ENCODE measurements at regions of chr2 and their contacts with region 1.

Region 1: GRCh38 chr2:207625018-207625907 is at the start of gene METTL21A:
- DNase-seq: peak; percentile 73
- ATAC-seq: peak; percentile 51
- H3K4me3 Mint-ChIP-seq: peak within 1 kb of the TSS; percentile 90
- H3K27ac Mint-ChIP-seq: peak within 1 kb of the TSS; percentile 97
- H3K4me1 Mint-ChIP-seq: peaks cover 24% of the 10 kb centered on the region
- H3K27me3 Mint-ChIP-seq: no peaks in the 10 kb centered on the region; the same call in 1 of the 2 replicates
- CTCF ChIP-seq: no peak
- total RNA-seq, gene METTL21A: 56.0 to 57.6 TPM (median 56.4 TPM) in 3 replicates

Region 2: DNA sequence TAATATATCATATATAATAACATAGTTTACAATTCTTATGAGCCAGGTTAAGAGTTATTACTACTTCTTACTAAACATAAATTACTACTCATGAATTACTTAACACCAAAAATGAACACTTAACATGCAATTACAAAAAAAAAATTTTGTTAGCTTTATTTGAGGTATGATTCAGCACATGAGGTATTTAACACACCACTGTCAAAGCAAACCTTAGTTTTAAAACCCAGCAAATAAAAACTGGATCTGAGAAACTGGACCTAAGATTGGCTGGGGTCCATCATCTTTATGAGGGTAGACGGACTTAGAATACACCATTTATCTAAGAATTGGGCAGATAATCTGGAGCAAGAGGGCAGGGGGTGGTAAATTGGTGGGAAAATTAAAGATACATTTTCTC is 177.3 kb before region 1 on chr2:
- CTCF ChIA-PET with region 1: no interaction called
- POLR2A ChIA-PET with region 1: no interaction called
- DNase-seq: no peak
- ATAC-seq: no peak
- H3K4me3 Mint-ChIP-seq: no peak overlapping the region
- H3K27ac Mint-ChIP-seq: no peak overlapping the region
- H3K4me1 Mint-ChIP-seq: peaks cover 57% of the 10 kb centered on the region
- H3K27me3 Mint-ChIP-seq: peaks cover 19% of the 10 kb centered on the region
- CTCF ChIP-seq: no peak

Region 3: DNA sequence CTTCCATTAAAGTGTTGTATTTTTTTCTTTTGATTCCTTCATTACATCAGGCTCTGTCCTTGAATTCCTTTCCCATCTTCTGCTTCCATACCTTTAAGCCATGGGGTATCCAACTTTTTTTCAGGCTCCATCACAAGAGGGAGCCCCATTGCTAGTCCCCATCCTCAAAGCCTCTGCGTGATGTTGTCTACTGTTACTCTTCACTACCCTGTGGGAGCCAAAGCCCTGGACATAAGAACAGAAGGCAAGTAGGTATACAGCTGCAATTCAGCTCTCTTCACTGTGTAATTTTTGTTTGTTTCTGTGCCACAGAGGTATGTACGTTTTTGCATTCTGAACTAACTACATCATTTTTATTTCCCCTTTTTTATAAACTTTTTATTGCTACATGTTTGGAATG is 49.6 kb after region 1 on chr2:
- CTCF ChIA-PET with region 1: interaction called, 11 read pairs
- POLR2A ChIA-PET with region 1: no interaction called
- DNase-seq: no peak
- ATAC-seq: peak; percentile 84
- H3K4me3 Mint-ChIP-seq: no peak overlapping the region
- H3K27ac Mint-ChIP-seq: peak overlapping the region; percentile 84
- H3K4me1 Mint-ChIP-seq: peaks cover 41% of the 10 kb centered on the region
- H3K27me3 Mint-ChIP-seq: no peaks in the 10 kb centered on the region
- CTCF ChIP-seq: no peak

Region 4: DNA sequence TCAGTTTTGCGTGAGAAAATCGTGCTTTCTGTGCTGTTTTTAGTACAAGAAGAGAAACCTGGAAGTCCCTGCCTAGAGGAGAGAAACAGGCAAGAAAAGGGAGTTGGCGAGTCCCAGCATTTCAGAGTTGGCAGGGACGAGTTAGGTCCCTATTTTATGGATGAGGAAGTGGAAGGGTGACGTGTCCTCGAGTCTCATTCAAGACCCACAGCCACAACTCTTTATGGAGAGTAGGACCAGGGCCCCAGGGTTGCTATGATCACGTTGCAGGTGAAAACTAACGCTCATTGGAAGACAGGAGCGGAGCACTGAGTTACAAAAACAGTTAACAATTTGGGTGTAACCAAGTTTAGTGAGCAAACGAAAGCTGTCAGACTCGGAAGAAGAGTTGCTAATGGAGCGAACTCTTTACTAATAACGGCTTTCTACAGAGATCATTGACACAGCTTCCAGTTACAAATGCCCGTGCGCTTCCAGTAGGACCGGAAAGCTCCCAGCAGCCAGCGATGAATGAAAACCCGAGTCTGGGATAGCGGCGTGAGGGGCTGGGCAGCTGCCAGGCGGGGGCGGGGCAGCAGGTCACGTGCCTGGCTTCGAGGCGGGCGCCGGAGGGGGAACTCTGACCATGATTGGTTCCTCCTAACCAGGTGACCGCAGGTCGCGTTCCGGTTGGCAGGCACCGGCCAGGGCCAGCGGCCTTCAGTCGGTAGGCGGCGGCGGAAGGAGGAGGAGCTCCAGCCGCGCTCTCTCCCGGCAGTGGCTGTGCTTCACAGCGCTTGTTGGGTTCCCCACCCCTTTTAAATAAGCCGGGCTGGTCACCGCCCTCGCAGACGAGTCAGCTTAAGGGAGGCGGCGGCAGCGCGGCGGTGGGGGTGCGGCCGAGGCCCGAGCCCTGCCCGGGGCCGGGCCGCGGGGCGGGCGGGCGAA is 85.8 kb after region 1 on chr2 and contains the start of gene CCNYL1:
- CTCF ChIA-PET with region 1: interaction called, 33 read pairs
- POLR2A ChIA-PET with region 1: interaction called, 22 read pairs
- DNase-seq: peak; percentile 99
- ATAC-seq: peak; percentile 98
- H3K4me3 Mint-ChIP-seq: peak within 1 kb of the TSS; percentile 99
- H3K27ac Mint-ChIP-seq: peak within 1 kb of the TSS; percentile 94
- H3K4me1 Mint-ChIP-seq: peaks cover 27% of the 10 kb centered on the region
- H3K27me3 Mint-ChIP-seq: no peaks in the 10 kb centered on the region
- CTCF ChIP-seq: no peak
- total RNA-seq, gene CCNYL1: 26.6 to 31.6 TPM (median 28.1 TPM) in 3 replicates

Region 5: DNA sequence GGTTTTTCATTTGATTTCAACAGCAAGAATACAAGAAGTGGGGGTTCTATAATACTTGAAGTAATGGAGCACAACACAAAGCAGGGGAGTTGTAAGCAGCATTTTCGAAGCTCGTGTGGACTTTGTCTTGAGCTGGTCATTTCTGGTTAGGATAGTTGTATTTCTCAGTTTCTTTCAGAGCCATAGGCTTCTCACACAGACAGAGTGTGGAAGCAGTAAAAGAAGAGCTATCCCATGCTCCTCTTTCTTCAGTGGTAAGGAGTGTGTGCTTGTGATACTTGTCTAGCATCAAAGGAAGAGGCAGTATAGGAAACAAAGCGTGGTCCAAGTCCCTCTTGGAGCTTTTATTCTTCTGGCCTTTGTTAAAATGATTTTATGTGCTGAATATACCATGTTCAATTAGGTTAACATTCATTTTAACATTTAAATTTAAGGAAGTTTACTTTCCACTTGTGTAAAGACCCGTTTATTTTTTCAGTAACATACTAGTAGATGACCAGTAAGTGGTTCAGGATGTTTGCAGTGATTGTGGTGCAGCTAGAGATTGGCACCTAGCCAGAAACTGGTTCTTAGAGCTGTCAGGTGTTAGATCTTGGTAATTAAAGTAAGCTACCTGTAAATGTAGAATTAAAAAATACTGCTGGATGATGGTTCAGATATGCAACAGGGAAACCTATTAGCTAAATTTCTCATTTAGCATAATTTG is 100.8 kb after region 1 on chr2:
- CTCF ChIA-PET with region 1: interaction called, 17 read pairs
- POLR2A ChIA-PET with region 1: interaction called, 3 read pairs
- DNase-seq: no peak
- ATAC-seq: no peak
- H3K4me3 Mint-ChIP-seq: no peak overlapping the region
- H3K27ac Mint-ChIP-seq: peak overlapping the region; percentile 57
- H3K4me1 Mint-ChIP-seq: peaks cover 17% of the 10 kb centered on the region
- H3K27me3 Mint-ChIP-seq: no peaks in the 10 kb centered on the region
- CTCF ChIP-seq: no peak

Region 6: GRCh38 chr2:207769597-207770486 is 144.6 kb after region 1 on chr2 and contains the start of gene FZD5:
- CTCF ChIA-PET with region 1: interaction called, 26 read pairs
- POLR2A ChIA-PET with region 1: interaction called, 15 read pairs
- DNase-seq: peak; percentile 99
- ATAC-seq: peak; percentile 82
- H3K4me3 Mint-ChIP-seq: peak within 1 kb of the TSS; percentile 94
- H3K27ac Mint-ChIP-seq: peak within 1 kb of the TSS; percentile 98
- H3K4me1 Mint-ChIP-seq: peaks cover 63% of the 10 kb centered on the region
- H3K27me3 Mint-ChIP-seq: no peaks in the 10 kb centered on the region
- CTCF ChIP-seq: no peak
- total RNA-seq, gene FZD5: 52.8 to 103 TPM (median 53.7 TPM) in 3 replicates

Region 7: DNA sequence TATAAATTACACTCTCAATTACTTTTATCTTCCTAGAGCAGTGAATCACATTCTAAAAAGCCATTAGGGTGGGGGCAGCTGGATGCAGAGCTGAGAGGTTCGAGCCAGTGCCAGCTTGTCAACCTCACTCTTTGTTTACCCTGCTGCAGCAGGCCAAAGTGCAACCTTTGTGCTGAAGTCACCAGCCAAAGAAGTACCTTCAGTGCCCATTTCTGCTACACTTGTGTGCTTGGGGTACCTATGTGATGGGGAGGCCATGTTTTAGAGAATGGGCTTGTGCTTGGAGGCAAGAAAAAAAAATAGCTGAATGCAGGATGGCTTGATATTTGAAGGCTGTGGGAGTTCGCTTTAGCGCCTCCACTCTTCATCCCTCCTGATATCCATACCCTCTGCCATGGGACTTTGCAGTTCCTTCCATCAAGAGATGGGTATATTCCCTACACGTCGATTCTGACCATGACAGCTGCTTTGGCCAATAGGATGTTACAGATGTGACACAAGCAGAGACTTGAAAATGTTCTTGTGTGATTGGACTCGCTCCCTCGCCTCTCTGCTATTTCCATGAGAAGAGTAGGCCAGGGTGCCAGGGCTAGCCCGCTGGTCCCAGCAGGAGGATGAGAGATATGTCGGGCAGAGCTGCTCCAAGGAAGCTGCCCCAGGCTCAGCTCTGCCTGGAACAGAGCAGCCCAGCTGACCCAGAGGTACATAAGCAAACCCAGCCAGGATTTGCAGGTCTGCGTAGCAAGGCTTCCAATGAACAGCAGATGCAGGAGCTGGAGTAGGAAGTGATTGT is 157.2 kb after region 1 on chr2:
- CTCF ChIA-PET with region 1: no interaction called
- POLR2A ChIA-PET with region 1: no interaction called
- DNase-seq: no peak
- ATAC-seq: peak; percentile 18; the same call in 1 of the 2 replicates
- H3K4me3 Mint-ChIP-seq: no peak overlapping the region
- H3K27ac Mint-ChIP-seq: no peak overlapping the region
- H3K4me1 Mint-ChIP-seq: peaks cover 17% of the 10 kb centered on the region
- H3K27me3 Mint-ChIP-seq: peaks cover 10% of the 10 kb centered on the region
- CTCF ChIP-seq: no peak